A549 (cell line): ENCODE measurements at regions of chr15 and their contacts with region 1.

Region 1: GRCh38 chr15:101608201-101608600 is 44.0 kb downstream of the TM2D3 start:
- DNase-seq: no peak
- ATAC-seq: peak in 1 of 2 experiments; percentile 39; a peak in 2 of 6 replicates
- H3K4me3 ChIP-seq: no peak overlapping the region
- H3K27ac ChIP-seq: no peak overlapping the region
- H3K4me1 ChIP-seq: no peaks in the 10 kb centered on the region
- CTCF ChIP-seq: no peak
- EP300 ChIP-seq: no peak
- POLR2A ChIP-seq: no peak
- RAD21 ChIP-seq: no peak

Region 2: GRCh38 chr15:101540480-101541239 is 67.5 kb before region 1 on chr15:
- CTCF ChIA-PET with region 1: no interaction called
- POLR2A ChIA-PET with region 1: no interaction called
- DNase-seq: peak in 1 of 2 experiments; percentile 27
- ATAC-seq: peak; percentile 44 to 73
- H3K4me3 ChIP-seq: no peak overlapping the region
- H3K27ac ChIP-seq: no peak overlapping the region
- H3K4me1 ChIP-seq: no peaks in the 10 kb centered on the region
- CTCF ChIP-seq: 0 out of 3 replicates have a peak, but pooled peaks have one; percentile 10
- EP300 ChIP-seq: no peak
- POLR2A ChIP-seq: no peak
- RAD21 ChIP-seq: peak; percentile 50 to 67

Region 3: DNA sequence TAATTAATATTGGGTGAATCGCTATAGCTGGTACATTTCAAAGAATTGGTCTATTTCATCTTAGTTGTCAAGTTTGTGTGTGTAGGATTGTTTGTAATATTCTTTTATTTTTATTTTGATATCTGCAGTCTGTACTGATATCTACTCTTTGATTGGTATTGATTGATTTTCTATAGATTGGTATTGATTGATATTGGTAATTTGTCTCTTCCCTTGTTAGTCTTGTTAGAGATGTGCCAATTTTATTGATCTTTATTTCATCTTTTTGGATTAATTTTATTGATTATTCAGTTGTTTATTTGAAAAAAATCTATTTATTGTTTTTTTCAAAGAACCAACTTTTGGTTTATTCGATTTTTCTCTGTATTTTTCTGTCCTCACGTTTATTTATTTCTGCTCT is 17.4 kb before region 1 on chr15:
- CTCF ChIA-PET with region 1: no interaction called
- POLR2A ChIA-PET with region 1: no interaction called
- DNase-seq: no peak
- ATAC-seq: no peak
- H3K4me3 ChIP-seq: no peak overlapping the region
- H3K27ac ChIP-seq: no peak overlapping the region
- H3K4me1 ChIP-seq: no peaks in the 10 kb centered on the region
- CTCF ChIP-seq: no peak
- EP300 ChIP-seq: no peak
- POLR2A ChIP-seq: no peak
- RAD21 ChIP-seq: no peak

Region 4: GRCh38 chr15:101625980-101626379 is 17.8 kb after region 1 on chr15:
- CTCF ChIA-PET with region 1: interaction called, 10 read pairs
- POLR2A ChIA-PET with region 1: no interaction called
- DNase-seq: no peak
- ATAC-seq: no peak
- H3K4me3 ChIP-seq: no peak overlapping the region
- H3K27ac ChIP-seq: no peak overlapping the region
- H3K4me1 ChIP-seq: no peaks in the 10 kb centered on the region
- CTCF ChIP-seq: no peak
- EP300 ChIP-seq: no peak
- POLR2A ChIP-seq: no peak
- RAD21 ChIP-seq: no peak